Motor neuron (in vitro differentiated cells): ENCODE measurements at regions of chr13 and their contacts with region 1.

Region 1: GRCh38 chr13:48126944-48127830 is 32.3 kb upstream of the MED4 start:
- ATAC-seq: peak in 7 of 8 experiments; percentile 29 to 91 (median 60)
- H3K4me3 ChIP-seq: no peak overlapping the region
- H3K27ac ChIP-seq: no peak overlapping the region
- H3K4me1 ChIP-seq: peaks cover 0 to 3% of the 10 kb centered on the region in 2 donors

Region 2: DNA sequence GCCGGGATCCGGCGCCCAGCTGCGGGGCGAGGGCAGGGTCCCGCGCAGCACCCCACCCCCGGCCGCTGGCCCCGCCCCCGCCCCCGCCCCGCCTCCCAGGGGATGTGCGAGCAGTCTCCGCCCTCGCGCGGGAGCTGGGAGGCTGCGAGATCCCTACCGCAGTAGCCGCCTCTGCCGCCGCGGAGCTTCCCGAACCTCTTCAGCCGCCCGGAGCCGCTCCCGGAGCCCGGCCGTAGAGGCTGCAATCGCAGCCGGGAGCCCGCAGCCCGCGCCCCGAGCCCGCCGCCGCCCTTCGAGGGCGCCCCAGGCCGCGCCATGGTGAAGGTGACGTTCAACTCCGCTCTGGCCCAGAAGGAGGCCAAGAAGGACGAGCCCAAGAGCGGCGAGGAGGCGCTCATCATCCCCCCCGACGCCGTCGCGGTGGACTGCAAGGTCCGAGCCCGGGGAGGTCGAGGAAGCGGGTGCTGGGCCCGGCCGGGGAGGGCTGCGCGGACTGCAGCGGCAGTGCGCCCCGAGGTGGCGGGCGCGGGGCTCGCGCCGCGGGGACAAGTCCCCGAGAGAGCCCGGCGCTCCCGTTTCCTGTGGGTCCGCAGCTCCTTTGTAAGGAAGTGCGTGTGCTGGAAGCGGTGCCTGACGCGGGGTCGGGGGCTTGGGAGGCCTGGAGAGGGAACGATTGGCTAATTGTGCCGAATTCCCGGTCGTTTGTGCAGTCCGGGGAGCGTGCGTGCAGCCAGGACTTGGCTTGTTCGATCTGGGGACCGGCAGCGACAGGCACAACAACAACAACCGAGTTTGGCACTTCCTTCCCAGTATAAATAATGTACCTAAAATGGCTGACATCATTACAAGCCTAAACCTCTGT is 106.1 kb after region 1 on chr13 and contains the start of gene ITM2B:
- in situ Hi-C with region 1: loop called in 1 of 9 experiments (anchors 25 kb)
- ATAC-seq: peak; percentile 82 to 90 (median 89)
- H3K4me3 ChIP-seq: peak within 1 kb of the TSS; percentile 88 to 98 (median 95)
- H3K27ac ChIP-seq: peak within 1 kb of the TSS; percentile 89
- H3K4me1 ChIP-seq: peaks cover 13 to 17% of the 10 kb centered on the region in 2 donors
- total RNA-seq, gene ITM2B: 100 to 965 (median 173) TPM

Region 3: GRCh38 chr13:48291730-48292129 is 164.5 kb after region 1 on chr13:
- in situ Hi-C with region 1: loop called in 1 of 9 experiments (anchors 25 kb)
- ATAC-seq: peak in 2 of 8 experiments; percentile 58 to 71
- H3K4me3 ChIP-seq: no peak overlapping the region
- H3K27ac ChIP-seq: no peak overlapping the region
- H3K4me1 ChIP-seq: no peaks in the 10 kb centered on the region

Region 4: GRCh38 chr13:48562296-48563066 is 435.3 kb after region 1 on chr13:
- in situ Hi-C with region 1: loop called in 1 of 9 experiments (anchors 25 kb)
- ATAC-seq: no peak
- H3K4me3 ChIP-seq: no peak overlapping the region
- H3K27ac ChIP-seq: no peak overlapping the region
- H3K4me1 ChIP-seq: no peaks in the 10 kb centered on the region

Region 5: GRCh38 chr13:48595431-48596429 is 468.5 kb after region 1 on chr13:
- in situ Hi-C with region 1: loop called in 3 of 9 experiments (anchors 25 kb)
- ATAC-seq: peak in 7 of 8 experiments; percentile 6 to 77 (median 37)
- H3K4me3 ChIP-seq: no peak overlapping the region
- H3K27ac ChIP-seq: peak overlapping the region in 1 of 2 donors; percentile 69
- H3K4me1 ChIP-seq: peaks cover 25 to 40% of the 10 kb centered on the region in 2 donors